Upper lobe of right lung (tissue), 1 donor: ENCODE measurements at regions of chr15 and their contacts with region 1.

Region 1: GRCh38 chr15:71743861-71744382 is 66.4 kb upstream of the NR2E3 start:
- DNase-seq: no peak
- ATAC-seq: peak; percentile 59
- H3K4me3 ChIP-seq: no peak overlapping the region
- H3K27ac ChIP-seq: no peak overlapping the region
- H3K4me1 ChIP-seq: peaks cover 3% of the 10 kb centered on the region
- H3K27me3 ChIP-seq: no peaks in the 10 kb centered on the region
- CTCF ChIP-seq: peak; percentile 79

Region 2: DNA sequence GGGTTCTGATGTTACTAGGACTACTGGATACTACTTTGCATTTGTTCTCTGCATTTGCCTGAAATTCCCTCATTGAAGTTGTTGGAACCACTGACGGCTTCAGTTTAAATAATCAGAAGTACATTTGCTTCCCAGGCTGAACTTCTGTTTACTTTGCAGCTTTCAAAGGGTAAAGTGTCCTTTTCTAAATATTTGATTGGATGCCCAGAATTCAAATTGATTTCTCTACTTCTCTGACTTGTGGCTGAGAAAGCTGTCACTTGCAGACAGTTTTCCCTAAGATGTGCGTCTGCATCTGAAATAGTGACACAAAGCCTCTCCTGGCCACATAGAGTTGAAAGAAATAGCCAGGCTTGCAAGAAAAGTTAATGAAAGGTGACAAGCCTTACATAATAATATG is 329.1 kb before region 1 on chr15:
- intact Hi-C with region 1: no loop called
- DNase-seq: no peak
- ATAC-seq: no peak
- H3K4me3 ChIP-seq: no peak overlapping the region
- H3K27ac ChIP-seq: no peak overlapping the region
- H3K4me1 ChIP-seq: peaks cover 20% of the 10 kb centered on the region
- H3K27me3 ChIP-seq: no peaks in the 10 kb centered on the region
- CTCF ChIP-seq: no peak

Region 3: GRCh38 chr15:72155635-72156616 is 412.0 kb after region 1 on chr15:
- intact Hi-C with region 1: loop called (anchors 10 kb)
- DNase-seq: peak; percentile 90
- ATAC-seq: peak; percentile 85
- H3K4me3 ChIP-seq: peak overlapping the region; percentile 63
- H3K27ac ChIP-seq: peak overlapping the region; percentile 80
- H3K4me1 ChIP-seq: peaks cover 23% of the 10 kb centered on the region
- H3K27me3 ChIP-seq: no peaks in the 10 kb centered on the region
- CTCF ChIP-seq: peak; percentile 90